RWPE1 (cell line): ENCODE measurements at regions of chr2 and their contacts with region 1.

Region 1: DNA sequence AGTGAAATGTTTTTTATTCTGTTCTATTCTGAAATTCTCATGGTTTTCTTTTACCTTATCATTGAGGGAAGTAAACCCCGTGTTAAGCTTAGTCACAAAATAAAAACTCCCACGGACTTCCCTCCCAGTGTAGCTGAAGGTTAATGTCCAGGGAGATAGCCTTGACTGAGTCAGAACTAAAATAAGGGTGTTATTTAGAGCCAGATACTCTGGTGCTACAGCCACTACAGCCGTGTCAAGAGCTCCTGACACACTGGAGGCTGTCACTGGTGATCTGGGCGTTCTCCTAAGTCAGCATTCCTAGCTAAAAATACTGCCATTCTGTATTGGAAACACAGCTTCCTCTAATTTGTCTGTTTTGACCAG is 82.0 kb upstream of the RANBP2 start:
- DNase-seq: no peak
- H3K27ac ChIP-seq: no peak overlapping the region
- CTCF ChIP-seq: no peak

Region 2: DNA sequence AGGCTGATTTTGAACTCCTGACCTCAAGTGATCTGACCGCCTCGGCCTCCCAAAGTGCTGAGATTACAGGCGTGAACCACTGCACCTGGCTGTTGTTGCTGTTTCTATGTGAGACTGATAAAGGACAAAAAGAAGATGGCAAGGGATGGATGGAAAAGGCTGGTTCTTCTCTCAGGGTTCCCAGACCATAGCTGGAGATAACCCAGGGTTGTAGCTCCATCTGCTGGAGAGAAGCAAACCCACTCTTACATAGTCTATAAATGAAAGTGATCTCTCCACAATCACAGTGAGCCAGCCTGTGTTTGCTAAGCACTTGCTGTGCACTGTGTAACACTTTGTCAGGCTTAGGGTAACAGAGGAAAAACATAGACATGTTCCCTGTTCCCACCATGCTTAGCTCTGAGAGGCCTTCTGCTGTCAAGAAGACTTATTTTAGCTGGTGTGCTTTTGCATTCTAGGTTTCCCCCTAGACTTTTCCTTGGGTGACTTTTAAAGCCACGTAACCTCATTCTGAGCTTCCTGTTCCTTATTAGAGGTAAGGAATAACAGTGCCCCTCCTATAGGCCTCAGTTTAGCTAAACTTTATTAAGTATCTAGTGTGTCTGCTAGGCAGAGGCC is 53.3 kb before region 1 on chr2:
- CTCF ChIA-PET with region 1: interaction called, 13 read pairs
- POLR2A ChIA-PET with region 1: no interaction called
- DNase-seq: peak; percentile 77
- H3K27ac ChIP-seq: no peak overlapping the region
- CTCF ChIP-seq: peak; percentile 77

Region 3: DNA sequence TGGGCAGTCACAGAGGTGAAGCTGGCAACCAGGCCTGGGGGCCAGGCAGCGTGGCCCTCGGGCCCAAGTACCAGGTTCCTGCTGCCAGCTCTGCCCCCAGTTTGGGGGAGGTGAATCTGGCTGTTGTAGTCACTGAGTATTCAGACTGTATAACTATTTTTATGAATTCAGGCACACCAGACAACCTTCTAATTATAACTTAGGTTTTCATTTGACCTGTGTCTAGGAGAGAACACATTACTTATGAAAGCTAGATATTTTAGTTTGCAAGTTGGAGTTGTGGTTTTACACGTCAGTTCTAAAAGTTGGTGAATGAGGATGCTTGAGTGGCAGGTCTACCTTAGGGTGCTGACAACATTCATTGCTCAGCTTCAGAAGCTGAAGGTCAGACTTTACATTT is 31.3 kb before region 1 on chr2:
- CTCF ChIA-PET with region 1: interaction called, 38 read pairs
- POLR2A ChIA-PET with region 1: no interaction called
- DNase-seq: no peak
- H3K27ac ChIP-seq: no peak overlapping the region
- CTCF ChIP-seq: no peak

Region 4: GRCh38 chr2:108612153-108612513 is 25.2 kb before region 1 on chr2:
- CTCF ChIA-PET with region 1: interaction called, 38 read pairs
- POLR2A ChIA-PET with region 1: no interaction called
- DNase-seq: no peak
- H3K27ac ChIP-seq: no peak overlapping the region
- CTCF ChIP-seq: no peak

Region 5: DNA sequence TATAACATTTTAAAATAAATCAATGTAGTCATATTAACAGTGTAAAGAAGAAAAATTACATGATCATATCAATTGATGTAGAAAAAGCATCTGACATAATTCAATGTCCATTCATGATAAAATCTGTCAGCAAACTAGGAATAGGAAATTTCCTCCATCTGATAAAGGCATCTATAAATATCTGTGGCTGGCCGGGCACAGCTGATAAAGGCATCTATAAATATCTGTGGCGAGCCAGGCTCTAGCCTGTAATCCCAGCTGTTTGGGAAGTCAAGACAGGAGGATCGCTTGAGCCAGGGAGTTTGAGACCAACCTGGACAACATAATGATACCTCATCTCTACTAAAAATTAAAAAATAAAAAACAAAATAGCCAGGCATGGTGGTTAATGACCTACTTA is 63.9 kb after region 1 on chr2:
- CTCF ChIA-PET with region 1: no interaction called
- POLR2A ChIA-PET with region 1: no interaction called
- DNase-seq: no peak
- H3K27ac ChIP-seq: no peak overlapping the region
- CTCF ChIP-seq: no peak

Region 6: DNA sequence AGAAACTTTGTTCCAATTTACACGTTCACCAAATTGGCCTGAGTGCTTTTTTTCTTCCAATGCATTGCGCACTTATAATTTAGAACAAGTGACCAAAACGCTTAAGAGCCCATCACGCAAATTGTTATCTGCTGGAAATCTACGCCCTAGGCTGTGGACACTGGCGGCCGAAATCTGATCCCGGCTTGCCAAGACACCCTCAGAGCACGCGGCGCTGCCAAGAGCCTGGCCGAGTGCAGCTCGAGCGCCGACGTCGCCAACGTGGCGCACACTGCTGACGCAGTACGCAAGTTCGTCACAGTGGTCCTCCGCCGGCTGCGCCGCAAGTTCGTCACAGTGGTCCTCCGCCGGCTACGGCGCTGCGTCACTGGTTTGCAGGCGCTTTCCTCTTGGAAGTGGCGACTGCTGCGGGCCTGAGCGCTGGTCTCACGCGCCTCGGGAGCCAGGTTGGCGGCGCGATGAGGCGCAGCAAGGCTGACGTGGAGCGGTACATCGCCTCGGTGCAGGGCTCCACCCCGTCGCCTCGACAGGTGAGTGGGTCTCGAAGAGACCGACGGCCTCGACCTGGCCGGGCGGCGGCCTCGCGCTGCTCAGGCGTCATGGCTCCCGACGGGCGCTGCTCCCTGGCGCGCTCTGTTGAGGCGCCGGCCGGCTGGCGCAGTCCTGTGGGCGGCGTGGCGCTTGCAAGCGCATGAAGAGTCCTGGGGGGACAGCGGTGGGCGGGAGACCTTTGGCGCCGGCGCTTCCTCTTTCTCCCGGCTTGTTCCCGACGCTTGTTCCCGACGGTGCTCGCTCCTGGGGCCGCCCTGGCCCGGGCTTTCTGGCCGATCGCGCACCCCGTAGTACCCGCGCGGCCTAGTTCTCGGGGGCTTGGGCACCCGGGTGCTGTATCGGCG is 82.1 kb after region 1 on chr2 and contains the start of gene RANBP2:
- CTCF ChIA-PET with region 1: no interaction called
- POLR2A ChIA-PET with region 1: no interaction called
- DNase-seq: peak; percentile 73
- H3K27ac ChIP-seq: peak within 1 kb of the TSS; percentile 88
- CTCF ChIP-seq: no peak